PC-9 (cell line): ENCODE measurements at regions of chr20 and their contacts with region 1.

Region 1: GRCh38 chr20:57030611-57031600 is 235.5 kb downstream of the BMP7 start:
- DNase-seq: peak; percentile 62 to 84
- H3K4me3 ChIP-seq: no peak overlapping the region
- H3K27ac ChIP-seq: peak overlapping the region; percentile 62
- H3K4me1 ChIP-seq: peaks cover 23% of the 10 kb centered on the region
- H3K27me3 ChIP-seq: no peaks in the 10 kb centered on the region
- CTCF ChIP-seq: no peak

Region 2: DNA sequence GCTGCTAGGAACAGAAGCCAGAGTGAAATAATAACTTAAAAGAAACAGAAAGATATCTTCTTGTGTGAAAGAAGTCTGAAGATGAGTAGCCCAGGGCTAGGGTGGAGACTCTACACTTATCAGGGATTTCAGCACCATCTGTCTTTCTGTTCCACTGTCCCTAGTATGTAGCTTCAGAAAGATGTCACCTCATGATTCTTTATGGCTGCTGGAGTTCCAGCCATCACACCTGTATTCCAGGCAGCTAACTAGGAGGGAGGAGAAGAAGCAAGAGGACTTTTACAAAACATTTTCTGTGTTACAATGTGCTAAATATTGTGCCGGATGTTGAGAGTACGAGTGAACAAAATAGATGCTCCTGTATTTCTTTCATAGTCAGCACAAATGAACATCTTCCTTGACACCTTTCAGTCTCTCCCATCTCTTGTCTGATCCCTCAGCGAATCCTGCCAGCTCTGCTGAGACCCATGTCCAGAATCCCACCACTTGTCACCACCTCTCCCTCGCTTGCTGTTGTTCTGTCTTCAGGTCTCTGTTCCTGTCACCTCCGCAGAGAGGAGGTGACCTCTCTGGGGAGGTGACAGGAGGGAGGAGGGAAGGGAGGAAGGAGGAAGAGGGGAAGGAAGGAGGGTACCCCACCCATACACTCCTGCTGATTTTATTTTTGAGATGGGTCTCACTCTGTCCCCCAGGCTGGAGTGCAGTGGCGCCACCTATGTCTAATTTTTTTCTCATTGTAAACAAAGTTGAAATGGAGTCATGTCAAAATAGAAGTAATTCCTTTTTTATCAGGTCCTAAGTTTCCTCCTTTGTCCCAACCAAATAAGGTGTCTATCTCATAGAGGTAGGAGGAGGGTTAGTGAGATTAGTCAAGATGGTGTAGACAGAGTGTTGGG is 212.9 kb before region 1 on chr20:
- CTCF ChIA-PET with region 1: no interaction called
- POLR2A ChIA-PET with region 1: no interaction called
- intact Hi-C with region 1: no loop called
- DNase-seq: no peak
- H3K4me3 ChIP-seq: no peak overlapping the region
- H3K27ac ChIP-seq: no peak overlapping the region
- H3K4me1 ChIP-seq: peaks cover 7% of the 10 kb centered on the region; the same call in 1 of the 2 replicates
- H3K27me3 ChIP-seq: no peaks in the 10 kb centered on the region
- CTCF ChIP-seq: peak; percentile 50; the same call in 1 of the 2 replicates

Region 3: DNA sequence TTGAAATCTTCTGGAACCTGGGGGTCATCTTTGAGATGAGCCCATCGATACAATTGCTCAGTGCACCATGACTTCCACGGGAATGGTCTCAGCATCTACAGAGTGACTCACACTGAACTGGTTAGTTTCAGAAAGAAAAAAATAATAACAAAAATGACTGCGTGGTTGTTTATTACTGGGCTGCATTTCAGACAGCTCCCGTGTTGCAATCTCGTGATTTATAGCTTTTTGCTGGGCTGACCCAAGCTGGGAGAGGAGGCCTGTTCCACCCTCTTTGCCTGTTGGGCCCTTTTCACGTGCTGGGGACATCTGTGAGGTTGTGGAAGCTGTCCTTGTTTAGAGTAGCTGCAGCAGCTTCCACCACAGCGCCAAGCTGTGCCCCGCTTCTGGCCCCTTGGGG is 10.0 kb after region 1 on chr20:
- CTCF ChIA-PET with region 1: interaction called, 11 read pairs
- POLR2A ChIA-PET with region 1: interaction called, 18 read pairs
- intact Hi-C with region 1: no loop called
- DNase-seq: peak in 1 of 2 experiments; percentile 81
- H3K4me3 ChIP-seq: no peak overlapping the region
- H3K27ac ChIP-seq: no peak overlapping the region; the same call in 1 of the 2 replicates
- H3K4me1 ChIP-seq: peaks cover 25% of the 10 kb centered on the region
- H3K27me3 ChIP-seq: no peaks in the 10 kb centered on the region
- CTCF ChIP-seq: no peak

Region 4: DNA sequence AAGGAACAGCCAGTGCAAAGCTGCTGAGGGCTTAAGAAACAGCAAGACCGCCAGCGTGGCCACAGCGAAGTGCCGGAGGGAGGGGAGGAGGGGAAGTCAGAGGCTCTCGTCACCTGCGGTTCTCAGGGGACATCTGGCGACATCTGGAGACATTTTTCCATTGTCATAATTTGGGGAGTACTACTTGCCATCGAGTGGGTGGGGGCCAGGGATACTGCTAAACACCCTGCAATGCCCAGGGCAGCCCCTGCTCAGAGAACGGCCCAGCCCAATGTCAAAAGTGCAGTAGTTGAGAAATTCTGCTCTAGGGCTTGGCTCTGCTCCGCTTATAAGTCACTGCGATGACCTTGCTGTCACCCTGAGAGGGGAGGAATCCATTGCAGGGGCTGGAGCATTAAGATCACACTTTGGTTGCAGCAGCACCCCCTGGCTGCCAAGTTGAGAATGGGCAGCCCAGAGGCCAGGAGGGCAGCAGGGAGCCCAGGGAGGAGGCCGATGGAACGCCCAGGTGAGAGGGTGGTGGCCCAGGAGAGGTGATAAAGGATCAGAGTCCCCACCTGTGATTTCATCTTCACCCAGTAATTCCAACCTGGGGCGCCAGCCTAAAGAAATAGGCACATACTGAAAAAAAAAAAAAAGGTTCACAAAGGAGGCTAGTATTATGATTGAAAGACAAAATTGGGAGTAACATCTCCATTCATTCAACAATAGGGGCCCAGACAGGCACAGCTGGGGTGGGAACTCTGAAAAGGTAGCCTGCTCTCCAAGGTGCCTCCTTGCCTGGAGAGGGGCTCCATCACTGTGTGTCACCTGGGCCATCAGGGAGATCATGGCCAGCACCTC is 17.3 kb after region 1 on chr20:
- CTCF ChIA-PET with region 1: interaction called, 11 read pairs
- POLR2A ChIA-PET with region 1: no interaction called
- intact Hi-C with region 1: no loop called
- DNase-seq: peak; percentile 47 to 89
- H3K4me3 ChIP-seq: peak overlapping the region; percentile 34; the same call in 1 of the 2 replicates
- H3K27ac ChIP-seq: peak overlapping the region; percentile 85
- H3K4me1 ChIP-seq: peaks cover 27% of the 10 kb centered on the region
- H3K27me3 ChIP-seq: no peaks in the 10 kb centered on the region
- CTCF ChIP-seq: peak; percentile 95